ENCODE measurements at regions of chrX and their contacts with region 1.

Region 1: GRCh38 chrX:120499301-120500072 is 30.4 kb upstream of the LAMP2 start:
- DNase-seq: no peak
- H3K4me3 ChIP-seq: no peak overlapping the region
- H3K27ac ChIP-seq: no peak overlapping the region
- H3K27me3 ChIP-seq: peaks cover 0 to 20% (median 0%) of the 10 kb centered on the region in 45 donors
- CTCF ChIP-seq: no peak

Region 2: DNA sequence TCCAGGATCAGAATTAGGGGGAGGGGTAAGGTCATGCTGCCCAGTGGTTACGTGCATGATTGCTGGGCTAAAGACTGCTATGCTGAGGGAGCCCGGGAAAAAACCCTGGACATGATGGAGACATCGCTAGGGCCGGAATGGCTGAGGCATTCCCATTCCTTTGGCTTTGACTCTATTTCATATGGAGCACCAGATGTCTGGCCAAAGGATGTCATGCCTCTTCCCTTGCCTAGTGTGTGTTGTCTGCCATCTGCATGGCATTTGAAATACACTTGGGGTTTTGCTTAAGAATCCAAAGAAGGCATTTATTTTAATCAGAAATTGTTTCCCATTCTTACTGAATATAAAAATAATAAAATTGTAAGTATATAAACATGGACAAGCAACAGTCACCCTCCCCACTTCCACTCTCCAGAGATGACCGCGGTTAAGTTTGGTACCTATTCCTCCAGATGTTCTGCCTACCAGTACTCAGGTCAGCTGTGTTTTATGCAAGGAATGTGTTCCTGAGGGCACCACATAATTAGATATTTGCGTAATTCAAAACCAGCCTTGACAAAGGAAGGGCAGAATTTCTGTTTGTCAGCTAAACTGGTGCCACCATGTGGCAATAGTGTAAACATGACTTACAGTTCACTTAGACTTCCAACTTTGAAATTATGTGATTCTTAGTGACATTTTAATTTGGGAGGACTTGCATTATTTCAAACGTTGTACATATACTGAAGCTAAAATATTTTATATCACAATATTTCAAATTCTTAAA is 270.3 kb after region 1 on chrX:
- intact Hi-C with region 1: loop called in 1 of 2 experiments (anchors 5 kb)
- DNase-seq: no peak
- H3K4me3 ChIP-seq: no peak overlapping the region
- H3K27ac ChIP-seq: no peak overlapping the region
- H3K27me3 ChIP-seq: peaks cover 0 to 65% (median 9%) of the 10 kb centered on the region in 45 donors
- CTCF ChIP-seq: peak in 51 of 56 donors; percentile 14 to 58 (median 36)

Measured in dorsolateral prefrontal cortex (tissue), 120 donors.